PC-9 (cell line): ENCODE measurements at regions of chr1 and their contacts with region 1.

Region 1: DNA sequence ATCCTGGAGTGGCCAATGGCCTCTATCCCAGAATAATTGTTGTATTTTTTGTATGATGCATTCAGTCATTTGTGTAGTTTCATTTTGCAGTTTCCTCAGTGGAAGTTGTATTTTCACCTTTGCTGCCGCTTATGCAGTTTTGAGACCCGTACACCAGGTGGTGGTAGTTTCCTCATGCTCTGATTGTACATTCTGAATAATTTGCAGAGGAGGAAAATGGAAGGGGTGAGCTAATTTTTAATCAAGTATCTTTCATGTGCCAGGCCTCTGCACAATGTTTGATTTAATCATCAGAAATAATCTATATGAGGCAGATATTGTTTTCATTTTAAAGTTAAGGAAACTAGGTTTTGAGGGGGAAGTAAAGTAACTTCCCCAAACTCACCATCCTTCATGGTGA is 29.5 kb downstream of the HLX start:
- DNase-seq: no peak
- H3K4me3 ChIP-seq: no peak overlapping the region
- H3K27ac ChIP-seq: no peak overlapping the region
- H3K4me1 ChIP-seq: peaks cover 22% of the 10 kb centered on the region
- H3K27me3 ChIP-seq: no peaks in the 10 kb centered on the region
- CTCF ChIP-seq: peak; percentile 54; the same call in 1 of the 2 replicates

Region 2: GRCh38 chr1:220680085-220680687 is 228.6 kb before region 1 on chr1:
- CTCF ChIA-PET with region 1: no interaction called
- POLR2A ChIA-PET with region 1: interaction called, 11 read pairs
- intact Hi-C with region 1: no loop called
- DNase-seq: peak in 1 of 2 experiments; percentile 21
- H3K4me3 ChIP-seq: no peak overlapping the region
- H3K27ac ChIP-seq: no peak overlapping the region
- H3K4me1 ChIP-seq: no peaks in the 10 kb centered on the region
- H3K27me3 ChIP-seq: no peaks in the 10 kb centered on the region
- CTCF ChIP-seq: peak; percentile 85

Region 3: DNA sequence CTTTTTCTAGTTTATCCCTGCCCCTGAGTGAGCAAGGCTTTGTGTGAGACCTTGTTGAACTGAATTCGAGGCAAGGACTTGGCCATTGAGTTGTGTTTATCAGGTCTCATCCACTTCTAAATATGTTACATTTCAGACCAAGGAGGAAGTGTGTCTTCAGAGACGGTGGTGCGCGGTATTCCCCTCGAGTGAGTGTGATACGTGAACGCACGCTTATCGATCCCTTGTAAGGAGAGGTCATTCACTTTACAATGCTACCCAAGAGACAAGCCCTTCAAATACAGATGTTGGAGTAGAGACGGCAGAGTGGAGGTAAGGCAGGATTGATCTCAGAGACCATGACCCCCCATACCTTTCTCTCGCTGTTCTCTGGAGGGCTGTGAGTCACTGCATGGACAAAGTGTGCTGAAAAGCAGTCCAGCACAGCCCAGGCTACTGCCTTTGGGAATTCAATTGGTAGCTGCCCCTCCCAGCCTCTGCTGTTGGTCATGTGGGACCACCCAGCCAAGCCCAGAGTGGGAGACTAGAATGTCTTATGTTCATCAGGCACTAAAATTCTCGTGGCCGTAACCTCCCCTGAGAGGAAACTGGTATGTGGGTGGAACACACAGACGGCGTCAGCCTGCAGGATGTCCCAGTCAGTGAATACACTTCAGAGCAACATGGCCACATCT is 138.4 kb before region 1 on chr1:
- CTCF ChIA-PET with region 1: no interaction called
- POLR2A ChIA-PET with region 1: no interaction called
- intact Hi-C with region 1: no loop called
- DNase-seq: no peak
- H3K4me3 ChIP-seq: no peak overlapping the region
- H3K27ac ChIP-seq: no peak overlapping the region
- H3K4me1 ChIP-seq: no peaks in the 10 kb centered on the region
- H3K27me3 ChIP-seq: no peaks in the 10 kb centered on the region
- CTCF ChIP-seq: no peak